ENCODE measurements at regions of chr19 and their contacts with region 1.

Region 1: GRCh38 chr19:11374433-11375142 is at the start of gene SWSAP1:
- DNase-seq: peak; percentile 87 to 99 (median 99)
- ATAC-seq: peak; percentile 94
- H3K4me3 ChIP-seq: peak within 1 kb of the TSS; percentile 92
- H3K4me3 Mint-ChIP-seq: peak within 1 kb of the TSS in 3 of 10 donors; percentile 31 to 56 (median 45)
- H3K27ac ChIP-seq: peak within 1 kb of the TSS; percentile 92
- H3K27ac Mint-ChIP-seq: peak within 1 kb of the TSS in 1 of 9 donors; percentile 22
- H3K4me1 ChIP-seq: peaks cover 21 to 30% of the 10 kb centered on the region in 2 donors
- H3K4me1 Mint-ChIP-seq: peaks cover 12 to 40% (median 28%) of the 10 kb centered on the region in 7 donors
- H3K27me3 ChIP-seq: no peaks in the 10 kb centered on the region
- H3K27me3 Mint-ChIP-seq: no peaks in the 10 kb centered on the region
- total RNA-seq, gene SWSAP1: 3.4 to 4.2 (median 4.0) TPM

Region 2: DNA sequence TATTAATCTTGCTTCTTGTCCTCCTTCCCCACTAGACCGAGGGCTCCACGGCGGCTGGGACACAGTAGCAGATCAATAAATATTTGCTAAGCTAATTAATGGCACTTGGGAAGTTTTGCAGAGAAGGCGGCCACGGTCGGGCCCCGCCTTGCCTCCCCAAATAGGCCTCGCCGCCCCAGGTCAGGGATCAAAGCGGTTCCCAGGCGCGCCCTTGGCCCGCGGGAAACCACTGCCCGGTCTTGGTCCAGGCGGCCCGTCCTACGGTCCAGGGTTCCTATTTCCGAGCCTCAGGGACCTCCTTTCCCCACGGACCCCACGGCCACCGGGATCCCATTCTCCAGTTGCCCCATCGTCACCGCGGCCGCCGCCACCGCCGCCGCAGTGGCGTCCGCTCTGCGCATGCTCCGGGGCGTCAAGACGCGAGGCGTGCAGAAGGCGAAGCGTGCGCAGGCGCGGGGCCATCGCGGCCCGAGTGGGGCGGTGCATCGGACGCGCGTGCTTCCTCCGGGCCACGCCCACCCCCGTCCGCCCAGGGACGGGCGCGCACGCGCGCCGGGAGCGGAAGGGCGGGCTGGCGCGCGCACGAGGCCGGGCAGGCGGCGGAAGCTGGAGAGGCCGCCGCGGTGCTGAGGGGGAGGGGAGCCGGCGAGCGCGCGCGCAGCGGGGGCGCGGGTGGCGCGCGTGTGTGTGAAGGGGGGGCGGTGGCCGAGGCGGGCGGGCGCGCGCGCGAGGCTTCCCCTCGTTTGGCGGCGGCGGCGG is 414.1 kb before region 1 on chr19 and contains the start of gene SMARCA4:
- CTCF ChIA-PET with region 1: no interaction called
- POLR2A ChIA-PET with region 1: no interaction called
- intact Hi-C with region 1: loop called in 1 of 2 experiments (anchors 2 kb)
- DNase-seq: peak; percentile 96 to 100 (median 99)
- ATAC-seq: peak; percentile 96
- H3K4me3 ChIP-seq: peak within 1 kb of the TSS; percentile 89
- H3K4me3 Mint-ChIP-seq: peak within 1 kb of the TSS; percentile 84 to 94 (median 90)
- H3K27ac ChIP-seq: peak within 1 kb of the TSS; percentile 89
- H3K27ac Mint-ChIP-seq: peak within 1 kb of the TSS; percentile 79 to 94 (median 93)
- H3K4me1 ChIP-seq: peaks cover 28 to 33% of the 10 kb centered on the region in 2 donors
- H3K4me1 Mint-ChIP-seq: peaks cover 22 to 42% (median 34%) of the 10 kb centered on the region in 7 donors
- H3K27me3 ChIP-seq: no peaks in the 10 kb centered on the region
- H3K27me3 Mint-ChIP-seq: no peaks in the 10 kb centered on the region
- total RNA-seq, gene SMARCA4: 96.0 to 126 (median 104) TPM

Region 3: DNA sequence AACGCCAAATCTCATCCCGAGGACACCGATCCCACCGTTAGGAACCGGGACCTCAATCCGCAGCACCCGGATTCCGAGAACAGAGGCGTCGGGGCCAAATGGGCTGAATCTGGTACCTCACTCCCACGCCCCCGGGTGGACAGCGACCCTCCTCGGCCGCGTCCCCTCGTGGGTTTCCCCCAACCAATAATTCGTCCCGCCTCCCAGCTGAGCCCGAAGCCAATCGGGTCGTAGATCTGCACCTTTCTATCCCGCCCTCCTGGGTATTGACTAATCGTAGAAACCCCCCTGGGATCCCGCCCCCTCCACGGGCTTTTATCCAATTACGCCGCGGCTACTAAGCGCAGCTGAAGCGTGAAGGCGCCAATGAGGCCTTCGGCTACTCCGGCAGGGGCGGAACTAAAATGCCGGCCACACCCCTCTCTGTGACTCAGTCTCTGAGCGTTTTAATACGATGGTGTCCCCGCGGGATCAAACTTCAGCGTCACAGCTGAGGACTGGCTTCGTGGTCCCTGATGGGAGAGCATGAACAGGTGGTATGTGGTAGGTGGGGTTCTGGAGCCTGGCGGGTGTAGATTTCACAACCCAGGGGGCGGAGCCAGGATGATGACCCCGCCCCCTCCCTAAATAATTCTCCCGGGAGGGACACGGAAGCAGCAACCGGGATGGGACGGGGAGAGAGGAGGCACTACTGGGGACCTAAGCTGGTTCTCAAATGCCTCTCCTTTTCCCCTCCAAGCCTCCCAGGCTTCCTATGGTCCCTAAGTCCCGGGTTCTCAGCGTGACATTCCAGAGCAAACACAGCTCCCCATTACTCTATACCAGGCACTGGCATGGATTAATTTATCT is 28.3 kb before region 1 on chr19 and contains the starts of genes CCDC159 and TMEM205:
- CTCF ChIA-PET with region 1: interaction called, 13 read pairs
- POLR2A ChIA-PET with region 1: interaction called, 36 read pairs
- intact Hi-C with region 1: loop called (anchors 1 kb)
- DNase-seq: peak; percentile 82 to 99 (median 98)
- ATAC-seq: peak; percentile 98
- H3K4me3 ChIP-seq: peak within 1 kb of the TSS; percentile 75
- H3K4me3 Mint-ChIP-seq: peak within 1 kb of the TSS; percentile 92 to 100 (median 98)
- H3K27ac ChIP-seq: peak within 1 kb of the TSS; percentile 83
- H3K27ac Mint-ChIP-seq: peak within 1 kb of the TSS; percentile 89 to 98 (median 96)
- H3K4me1 ChIP-seq: peaks cover 13 to 14% of the 10 kb centered on the region in 2 donors
- H3K4me1 Mint-ChIP-seq: peaks cover 22 to 39% (median 29%) of the 10 kb centered on the region in 7 donors
- H3K27me3 ChIP-seq: no peaks in the 10 kb centered on the region
- H3K27me3 Mint-ChIP-seq: no peaks in the 10 kb centered on the region
- total RNA-seq, gene CCDC159: 17.6 to 87.4 (median 84.3) TPM
- total RNA-seq, gene TMEM205: 19.5 to 36.7 (median 29.5) TPM

Region 4: DNA sequence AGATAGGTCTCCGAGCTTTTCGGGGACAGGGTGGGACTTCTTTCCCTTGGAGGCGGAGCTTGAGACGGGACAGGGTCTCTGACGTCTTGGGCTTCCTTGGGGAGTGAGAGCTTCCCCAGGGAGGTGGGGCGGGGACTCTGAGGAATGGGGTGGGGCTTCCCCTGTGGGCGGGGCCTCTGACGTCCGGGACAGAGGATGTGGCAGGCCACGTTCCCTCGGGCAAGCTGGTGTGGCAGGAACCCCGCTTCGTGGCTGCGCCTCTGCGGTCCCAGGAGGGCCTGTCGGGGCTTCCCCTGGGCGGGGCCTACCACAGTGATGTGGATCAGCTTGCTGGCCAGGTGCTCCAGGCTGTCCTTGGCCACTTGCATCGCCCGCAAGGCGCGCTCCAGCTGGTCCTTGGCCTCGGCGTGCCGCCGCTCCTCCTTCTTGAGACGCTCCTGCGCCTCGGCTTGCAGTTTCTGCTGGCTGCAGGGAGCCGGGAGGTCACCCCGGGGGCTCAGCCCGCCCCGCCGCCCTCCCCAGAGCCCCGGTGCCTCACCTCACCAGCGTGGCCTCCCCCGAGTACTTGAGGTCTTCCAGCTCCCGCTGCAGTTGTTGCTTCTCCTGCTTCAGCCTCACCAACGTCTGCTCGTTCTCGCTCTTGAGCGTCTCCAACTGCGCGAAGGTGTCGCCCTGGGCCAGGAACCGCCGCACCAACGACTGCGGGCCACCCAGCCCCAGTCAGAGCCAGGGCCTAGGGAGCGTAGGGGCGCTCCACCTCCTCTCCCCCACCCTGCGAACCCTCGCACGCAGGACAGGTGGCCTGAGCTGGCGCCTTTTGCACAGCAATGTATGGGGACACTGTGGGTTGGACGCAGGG is 47.8 kb after region 1 on chr19:
- CTCF ChIA-PET with region 1: interaction called, 4 read pairs
- POLR2A ChIA-PET with region 1: interaction called, 31 read pairs
- intact Hi-C with region 1: no loop called
- DNase-seq: peak; percentile 27 to 72 (median 39)
- ATAC-seq: peak; percentile 81
- H3K4me3 ChIP-seq: peak overlapping the region; percentile 47
- H3K4me3 Mint-ChIP-seq: peak overlapping the region; percentile 74 to 85 (median 81)
- H3K27ac ChIP-seq: no peak overlapping the region
- H3K27ac Mint-ChIP-seq: no peak overlapping the region
- H3K4me1 ChIP-seq: peaks cover 14 to 40% of the 10 kb centered on the region in 2 donors
- H3K4me1 Mint-ChIP-seq: peaks cover 27 to 45% (median 37%) of the 10 kb centered on the region in 7 donors
- H3K27me3 ChIP-seq: peaks cover 9 to 36% of the 10 kb centered on the region in 2 donors
- H3K27me3 Mint-ChIP-seq: peaks cover 34 to 64% (median 48%) of the 10 kb centered on the region in 5 donors

Region 5: GRCh38 chr19:11453468-11454341 is 79.1 kb after region 1 on chr19:
- CTCF ChIA-PET with region 1: no interaction called
- POLR2A ChIA-PET with region 1: no interaction called
- intact Hi-C with region 1: no loop called
- DNase-seq: peak in 3 of 9 donors; percentile 9 to 15 (median 12)
- ATAC-seq: peak; percentile 58
- H3K4me3 ChIP-seq: no peak overlapping the region
- H3K4me3 Mint-ChIP-seq: peak overlapping the region in 1 of 10 donors; percentile 38
- H3K27ac ChIP-seq: no peak overlapping the region
- H3K27ac Mint-ChIP-seq: no peak overlapping the region
- H3K4me1 ChIP-seq: no peaks in the 10 kb centered on the region
- H3K4me1 Mint-ChIP-seq: peaks cover 0 to 3% (median 0%) of the 10 kb centered on the region in 7 donors
- H3K27me3 ChIP-seq: no peaks in the 10 kb centered on the region
- H3K27me3 Mint-ChIP-seq: no peaks in the 10 kb centered on the region

Measured in naive thymus-derived CD4-positive, alpha-beta T cell (primary cell).